Psoas muscle (tissue), 8 donors: ENCODE measurements at regions of chr3 and their contacts with region 1.

Region 1: DNA sequence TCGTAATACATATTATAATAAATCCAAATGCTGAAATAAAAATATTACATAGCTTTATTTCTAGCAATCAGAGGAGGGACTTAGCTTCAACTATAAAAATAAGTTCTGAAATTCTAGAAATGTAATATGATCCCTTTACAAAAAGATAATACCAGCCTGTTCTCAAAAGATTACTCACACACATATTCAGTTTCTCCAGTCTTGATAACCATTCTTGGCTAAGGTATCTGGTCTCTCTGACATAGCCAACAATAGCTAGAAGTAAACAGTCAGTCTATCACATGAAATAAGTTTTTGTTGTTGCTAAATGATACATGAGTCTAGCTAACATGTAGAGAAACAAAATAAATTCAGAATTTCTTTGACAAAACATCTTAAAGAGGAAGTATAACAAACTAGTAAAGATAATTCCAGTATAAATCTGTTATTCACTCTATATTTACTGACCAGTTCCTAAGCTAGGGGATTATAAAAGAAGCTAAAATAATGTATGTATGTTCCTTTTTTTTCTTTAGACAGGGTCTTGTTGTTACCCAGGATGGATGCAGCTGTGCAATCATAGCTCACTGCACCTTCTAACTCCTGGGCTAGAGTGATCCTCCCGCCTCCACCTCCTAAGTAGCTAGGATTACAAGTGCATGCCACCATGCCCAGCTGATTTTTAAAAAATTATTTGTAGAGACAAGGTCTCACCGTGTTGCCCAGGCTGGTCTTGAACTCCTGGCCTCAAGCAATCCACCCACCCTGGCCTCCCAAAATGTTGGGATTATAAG is 170.6 kb downstream of the TBL1XR1 start:
- DNase-seq: no peak
- ATAC-seq: peak; percentile 37 to 74 (median 52)
- H3K4me3 ChIP-seq: no peak overlapping the region
- H3K27ac ChIP-seq: no peak overlapping the region
- H3K4me1 ChIP-seq: peaks cover 11% of the 10 kb centered on the region
- H3K27me3 ChIP-seq: no peaks in the 10 kb centered on the region
- CTCF ChIP-seq: no peak

Region 2: DNA sequence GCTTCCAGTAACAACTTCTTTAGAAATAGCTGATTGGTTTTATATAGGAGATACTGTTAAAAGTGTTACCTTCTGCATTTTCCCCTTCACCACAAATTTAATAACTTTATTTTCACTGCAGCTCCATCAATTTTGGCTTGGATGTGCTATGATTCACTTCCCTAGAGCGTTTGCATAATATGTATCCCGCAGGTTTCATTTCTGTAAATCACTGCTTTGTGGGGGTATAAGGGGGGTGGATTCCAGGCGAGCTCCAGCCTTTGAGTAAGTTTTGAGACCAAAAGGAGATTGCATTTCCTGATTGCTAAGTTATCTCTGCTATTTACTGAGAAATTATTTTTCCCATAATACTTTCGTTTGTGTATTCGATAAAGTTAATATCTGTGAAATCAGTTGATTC is 62.0 kb before region 1 on chr3:
- intact Hi-C with region 1: loop called in 1 of 2 experiments (anchors 5 kb)
- DNase-seq: no peak
- ATAC-seq: no peak
- H3K4me3 ChIP-seq: no peak overlapping the region
- H3K27ac ChIP-seq: no peak overlapping the region
- H3K4me1 ChIP-seq: no peaks in the 10 kb centered on the region
- H3K27me3 ChIP-seq: no peaks in the 10 kb centered on the region
- CTCF ChIP-seq: no peak

Region 3: DNA sequence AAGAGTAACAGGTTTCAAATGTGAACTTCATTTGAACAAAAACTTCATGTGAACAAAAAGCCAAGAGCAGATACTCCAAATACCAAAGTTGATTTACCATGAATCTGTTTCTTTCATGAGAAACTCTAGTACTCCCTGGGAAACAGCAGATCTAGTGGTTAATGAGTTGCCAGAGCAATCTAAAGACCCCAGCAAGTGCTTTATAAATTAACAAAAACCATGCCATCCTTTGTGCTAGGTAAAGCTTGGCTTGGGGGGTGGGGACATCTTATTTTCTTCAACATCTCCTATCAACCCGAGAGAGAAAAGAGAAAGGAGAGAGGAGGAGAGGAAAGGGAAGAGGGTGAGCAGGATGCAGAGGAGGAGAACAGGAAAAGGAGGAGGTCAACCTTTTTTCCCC is 69.9 kb after region 1 on chr3:
- intact Hi-C with region 1: no loop called
- DNase-seq: no peak
- ATAC-seq: no peak
- H3K4me3 ChIP-seq: no peak overlapping the region
- H3K27ac ChIP-seq: no peak overlapping the region
- H3K4me1 ChIP-seq: peaks cover under 1% of the 10 kb centered on the region
- H3K27me3 ChIP-seq: no peaks in the 10 kb centered on the region
- CTCF ChIP-seq: no peak